Caco-2 (cell line): ENCODE measurements at regions of chr2 and their contacts with region 1.

Region 1: GRCh38 chr2:142863485-142863961 is 13.9 kb upstream of the KYNU start:
- DNase-seq: peak in 1 of 2 experiments; percentile 27
- H3K4me3 ChIP-seq: no peak overlapping the region
- H3K4me3 Mint-ChIP-seq: peak overlapping the region; percentile 11
- H3K27ac Mint-ChIP-seq: no peak overlapping the region
- H3K4me1 ChIP-seq: no peaks in the 10 kb centered on the region
- H3K4me1 Mint-ChIP-seq: peaks cover 12% of the 10 kb centered on the region
- H3K27me3 ChIP-seq: no peaks in the 10 kb centered on the region; the same call in 1 of the 2 replicates
- H3K27me3 Mint-ChIP-seq: no peaks in the 10 kb centered on the region
- CTCF ChIP-seq: no peak

Region 2: DNA sequence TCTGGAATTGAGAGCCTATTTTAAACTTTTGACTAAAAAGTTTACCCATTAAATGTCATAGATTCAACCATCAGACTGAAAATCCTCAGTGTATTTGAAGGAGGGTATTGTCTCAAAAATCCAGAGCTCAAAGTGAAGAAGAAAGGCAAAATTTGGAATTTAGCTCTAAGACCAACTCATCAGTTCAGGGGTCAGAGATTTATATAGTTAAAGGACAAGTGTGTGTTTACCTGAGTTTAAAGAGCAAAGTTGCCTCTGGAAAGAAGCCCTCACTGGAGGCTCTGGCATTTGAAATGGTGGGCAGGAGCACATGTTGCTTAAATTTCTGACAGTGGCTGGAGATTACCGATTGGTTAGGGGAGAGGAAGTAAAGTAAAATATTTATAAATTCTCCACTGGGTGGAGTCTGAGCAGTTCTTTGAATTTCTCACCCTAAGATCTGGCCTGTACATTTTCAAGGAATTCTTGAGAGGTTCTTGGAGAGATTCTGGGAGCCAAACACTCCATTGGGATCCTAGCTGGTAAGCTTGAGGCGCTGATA is 13.8 kb after region 1 on chr2 and contains the start of gene KYNU:
- CTCF ChIA-PET with region 1: no interaction called
- POLR2A ChIA-PET with region 1: no interaction called
- intact Hi-C with region 1: loop called (anchors 1 kb)
- DNase-seq: no peak
- H3K4me3 ChIP-seq: no peak within 1 kb of the TSS
- H3K4me3 Mint-ChIP-seq: peak within 1 kb of the TSS; percentile 9
- H3K27ac Mint-ChIP-seq: no peak within 1 kb of the TSS
- H3K4me1 ChIP-seq: peaks cover 45% of the 10 kb centered on the region
- H3K4me1 Mint-ChIP-seq: peaks cover 39% of the 10 kb centered on the region
- H3K27me3 ChIP-seq: no peaks in the 10 kb centered on the region
- H3K27me3 Mint-ChIP-seq: no peaks in the 10 kb centered on the region
- CTCF ChIP-seq: no peak
- total RNA-seq, gene KYNU: 4.3 and 5.2 TPM in 2 replicates